Heart right ventricle (tissue), 16 donors: ENCODE measurements at regions of chrX and their contacts with region 1.

Region 1: DNA sequence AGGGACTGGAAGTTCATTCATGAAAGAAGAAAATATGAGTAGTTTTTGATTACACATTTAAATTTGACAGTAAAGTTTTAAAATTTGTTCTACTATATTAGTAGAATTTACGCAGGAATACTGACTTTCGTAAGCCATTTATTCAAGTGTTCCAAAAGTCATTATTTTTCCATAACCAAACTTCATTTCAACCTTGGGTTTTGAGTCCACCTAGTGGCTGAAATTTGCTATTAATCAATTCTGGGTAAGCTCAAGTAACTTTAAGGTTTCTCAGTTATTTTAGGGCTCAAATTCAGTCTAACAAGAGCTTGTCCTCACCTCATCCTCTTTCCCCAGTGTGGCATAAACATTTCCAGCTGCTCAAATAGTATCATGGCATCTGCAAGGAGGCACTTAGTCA is 175.4 kb downstream of the SH3BGRL start:
- DNase-seq: no peak
- ATAC-seq: no peak
- H3K4me3 ChIP-seq: no peak overlapping the region
- H3K27ac ChIP-seq: no peak overlapping the region
- H3K4me1 ChIP-seq: no peaks in the 10 kb centered on the region
- H3K27me3 ChIP-seq: peaks cover 0 to 13% (median 0%) of the 10 kb centered on the region in 7 donors
- CTCF ChIP-seq: peak in 8 of 9 donors; percentile 25 to 61 (median 51)

Region 2: DNA sequence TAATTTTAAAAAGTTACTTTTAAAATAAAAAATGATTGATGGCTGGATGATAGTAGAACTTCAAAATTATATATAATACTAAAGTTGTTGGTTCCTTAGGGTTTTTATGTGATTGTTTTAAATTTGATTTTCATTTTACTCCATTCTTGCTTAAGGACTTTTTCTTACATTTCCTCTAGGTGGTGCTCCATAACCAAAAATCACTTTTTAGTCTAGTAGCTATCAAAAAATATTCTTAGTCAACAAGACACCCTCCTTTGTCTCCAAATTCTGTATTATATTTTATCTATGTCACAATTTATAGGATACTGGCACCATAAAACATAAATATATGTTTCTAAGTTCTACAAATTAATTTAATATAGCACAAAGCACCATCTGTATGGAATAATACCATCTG is 500.5 kb before region 1 on chrX:
- intact Hi-C with region 1: loop called in 1 of 10 experiments (anchors 10 kb)
- DNase-seq: no peak
- ATAC-seq: no peak
- H3K4me3 ChIP-seq: no peak overlapping the region
- H3K27ac ChIP-seq: no peak overlapping the region
- H3K4me1 ChIP-seq: no peaks in the 10 kb centered on the region
- H3K27me3 ChIP-seq: peaks cover 0 to 15% (median 0%) of the 10 kb centered on the region in 7 donors
- CTCF ChIP-seq: peak in 7 of 9 donors; percentile 41 to 62 (median 54)

Region 3: GRCh38 chrX:81174286-81174685 is 203.0 kb before region 1 on chrX:
- intact Hi-C with region 1: loop called in 5 of 10 experiments (anchors 5 to 10 kb)
- DNase-seq: no peak
- ATAC-seq: no peak
- H3K4me3 ChIP-seq: no peak overlapping the region
- H3K27ac ChIP-seq: no peak overlapping the region
- H3K4me1 ChIP-seq: no peaks in the 10 kb centered on the region
- H3K27me3 ChIP-seq: no peaks in the 10 kb centered on the region
- CTCF ChIP-seq: peak in 4 of 9 donors; percentile 21 to 46 (median 39)

Region 4: DNA sequence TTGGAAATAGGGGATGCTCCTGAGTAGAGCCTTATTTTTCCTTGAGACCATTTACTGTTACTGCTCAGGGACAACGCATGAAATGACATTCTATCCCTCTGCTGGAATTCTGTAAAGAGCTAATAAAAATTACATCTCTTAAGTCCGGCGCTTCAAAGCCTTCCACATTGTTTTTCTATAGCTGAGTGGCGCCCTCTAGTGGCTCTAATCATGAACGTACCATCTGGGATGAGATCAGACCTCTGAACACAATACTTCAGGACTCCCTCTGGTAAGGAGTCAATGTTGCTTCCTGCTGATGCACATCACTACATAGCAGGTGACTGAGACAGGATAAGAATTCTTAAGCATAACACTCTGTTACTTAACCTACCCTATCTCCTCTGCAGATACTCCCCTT is 181.6 kb before region 1 on chrX:
- intact Hi-C with region 1: loop called in 2 of 10 experiments (anchors 5 to 10 kb)
- DNase-seq: peak in 1 of 2 donors; percentile 27
- ATAC-seq: peak in 4 of 8 donors; percentile 29 to 57 (median 42)
- H3K4me3 ChIP-seq: no peak overlapping the region
- H3K27ac ChIP-seq: no peak overlapping the region
- H3K4me1 ChIP-seq: peaks cover 0 to 3% (median 0%) of the 10 kb centered on the region in 9 donors
- H3K27me3 ChIP-seq: no peaks in the 10 kb centered on the region
- CTCF ChIP-seq: peak; percentile 25 to 72 (median 60)